AG04450 (cell line): ENCODE measurements at regions of chr2 and their contacts with region 1.

Region 1: GRCh38 chr2:10434886-10435819 is 13.0 kb downstream of the ODC1 start:
- DNase-seq: peak; percentile 34
- H3K4me3 ChIP-seq: no peak overlapping the region
- H3K27ac ChIP-seq: no peak overlapping the region
- H3K27me3 ChIP-seq: no peaks in the 10 kb centered on the region
- CTCF ChIP-seq: peak; percentile 97

Region 2: DNA sequence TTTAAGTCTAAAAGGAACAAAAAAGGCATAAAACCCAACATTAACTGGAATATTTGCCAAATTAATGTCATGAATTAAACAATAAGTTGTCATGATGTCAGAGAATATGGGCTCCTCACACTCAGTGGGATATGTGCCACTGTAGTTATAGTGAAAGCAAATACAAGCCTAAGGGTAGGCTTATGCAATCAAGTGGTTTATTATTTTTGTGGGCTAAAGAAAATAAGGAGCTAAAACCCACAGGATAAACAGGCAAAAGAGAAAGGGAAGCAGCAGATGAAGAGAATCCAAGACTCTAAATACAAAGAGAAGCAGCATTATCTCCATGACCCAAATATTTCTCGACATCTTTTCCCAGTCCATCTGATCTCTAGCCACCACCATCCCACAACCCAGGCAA is 821.9 kb before region 1 on chr2:
- CTCF ChIA-PET with region 1: no interaction called
- POLR2A ChIA-PET with region 1: no interaction called
- DNase-seq: no peak
- H3K4me3 ChIP-seq: no peak overlapping the region
- H3K27ac ChIP-seq: no peak overlapping the region
- H3K27me3 ChIP-seq: no peaks in the 10 kb centered on the region
- CTCF ChIP-seq: no peak

Region 3: DNA sequence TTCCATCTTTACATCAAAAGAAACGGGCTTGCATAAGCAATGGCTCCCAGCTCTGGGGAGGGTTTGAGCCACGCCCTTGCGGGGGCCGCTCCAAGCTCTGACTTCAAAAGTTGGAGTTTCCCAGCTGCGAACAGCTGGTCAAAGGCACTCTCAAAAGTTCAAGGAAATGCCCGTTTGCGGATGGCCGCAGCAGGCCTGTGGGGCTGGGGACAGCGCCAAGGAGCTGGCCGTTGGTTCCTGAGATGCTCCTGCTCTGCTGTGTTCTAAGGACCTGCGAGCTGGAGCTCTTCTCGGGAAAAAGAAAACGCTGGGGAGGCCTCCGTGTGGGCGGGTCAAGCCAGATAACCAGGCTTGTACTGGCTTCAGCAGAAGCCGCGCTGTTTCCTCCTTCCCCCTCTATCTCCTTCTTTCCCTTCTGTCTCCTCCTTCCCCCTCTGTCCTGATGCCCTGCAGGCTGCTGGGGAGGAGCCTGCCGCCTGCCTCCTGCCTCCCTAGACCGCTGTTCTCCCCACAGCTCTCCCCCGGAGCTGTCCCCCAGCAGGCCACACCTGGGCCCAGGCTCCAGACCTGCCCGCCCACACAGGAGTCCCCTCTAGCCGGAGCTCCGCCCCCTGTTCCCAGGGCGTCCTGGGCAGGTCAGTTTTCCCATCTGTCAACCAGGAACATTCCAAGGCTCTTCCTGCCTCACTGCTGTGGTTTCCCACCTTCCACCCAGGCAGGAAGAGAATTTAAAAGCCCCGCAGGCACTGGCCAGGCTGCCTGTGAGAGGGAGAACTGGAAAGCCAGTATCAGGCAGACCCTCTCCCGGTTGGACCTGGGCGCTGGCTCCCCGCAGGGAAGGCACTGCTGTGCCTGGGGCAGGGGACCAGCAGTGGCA is 377.7 kb before region 1 on chr2:
- CTCF ChIA-PET with region 1: interaction called, 10 read pairs
- POLR2A ChIA-PET with region 1: interaction called, 5 read pairs
- DNase-seq: peak; percentile 62
- H3K4me3 ChIP-seq: peak overlapping the region; percentile 39
- H3K27ac ChIP-seq: peak overlapping the region; percentile 94
- H3K27me3 ChIP-seq: peaks cover 9% of the 10 kb centered on the region
- CTCF ChIP-seq: no peak

Region 4: DNA sequence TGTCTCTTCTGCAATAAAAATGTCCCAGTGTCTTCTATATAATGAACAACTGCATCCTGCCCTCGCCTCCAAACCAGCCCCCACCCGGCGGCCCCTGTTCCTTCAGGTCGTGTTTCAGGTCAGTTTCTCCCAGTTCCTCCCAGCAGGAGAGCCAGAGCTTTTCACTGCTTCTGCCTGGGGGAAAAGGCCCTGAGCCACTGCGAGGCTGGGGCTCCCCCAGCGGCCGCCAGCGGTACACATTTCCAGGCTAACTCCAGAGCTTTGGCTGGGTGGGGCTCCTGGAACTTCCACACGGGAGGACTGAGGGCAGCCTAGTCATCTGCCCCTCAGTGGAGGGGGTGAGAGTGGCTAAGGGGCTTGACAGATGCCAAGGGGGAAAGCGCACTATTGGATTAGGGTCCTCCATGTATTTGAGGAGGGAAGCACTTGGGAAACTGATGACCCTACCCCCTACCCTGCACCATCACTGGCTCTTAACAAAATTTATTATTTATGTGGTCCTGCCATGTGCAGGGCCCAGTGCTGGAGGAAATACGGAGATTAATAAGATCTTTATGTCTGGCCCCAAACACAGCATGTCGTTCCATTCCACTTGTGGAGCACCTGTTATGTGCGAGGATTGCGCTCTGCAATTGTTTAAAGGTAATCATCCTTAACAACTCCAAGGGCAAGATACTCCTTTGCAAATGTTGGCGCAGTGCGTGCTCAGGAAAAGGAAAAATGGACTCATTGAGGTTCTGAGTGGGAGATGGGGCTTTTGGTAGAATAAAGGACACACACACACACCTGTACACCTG is 337.6 kb before region 1 on chr2:
- CTCF ChIA-PET with region 1: interaction called, 19 read pairs
- POLR2A ChIA-PET with region 1: no interaction called
- DNase-seq: no peak
- H3K4me3 ChIP-seq: no peak overlapping the region
- H3K27ac ChIP-seq: no peak overlapping the region
- H3K27me3 ChIP-seq: peaks cover 2% of the 10 kb centered on the region
- CTCF ChIP-seq: peak; percentile 95

Region 5: GRCh38 chr2:10269711-10270610 is 165.2 kb before region 1 on chr2:
- CTCF ChIA-PET with region 1: interaction called, 10 read pairs
- POLR2A ChIA-PET with region 1: no interaction called
- DNase-seq: no peak
- H3K4me3 ChIP-seq: no peak overlapping the region
- H3K27ac ChIP-seq: no peak overlapping the region
- H3K27me3 ChIP-seq: peaks cover 2% of the 10 kb centered on the region
- CTCF ChIP-seq: no peak

Region 6: DNA sequence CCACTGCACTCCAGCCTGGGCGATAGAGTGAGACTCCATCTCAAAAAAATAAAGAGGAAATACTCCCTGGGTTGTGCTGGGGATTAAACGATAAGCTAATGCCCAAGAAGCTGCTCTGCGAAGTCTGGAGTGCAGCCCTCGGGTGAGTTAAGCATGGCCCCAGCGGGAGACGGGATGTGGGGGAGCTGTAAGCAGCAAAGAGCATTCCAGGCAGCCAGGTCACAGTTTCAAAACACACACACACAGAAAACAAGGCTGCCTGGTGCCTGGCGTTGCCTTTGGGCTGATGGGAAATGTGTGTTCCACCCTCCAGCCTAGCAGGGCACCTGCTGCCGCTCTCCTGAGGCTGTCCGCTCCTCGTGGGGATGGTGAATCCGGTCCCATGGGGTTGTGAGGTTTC is 11.1 kb before region 1 on chr2:
- CTCF ChIA-PET with region 1: interaction called, 10 read pairs
- POLR2A ChIA-PET with region 1: no interaction called
- DNase-seq: peak; percentile 51
- H3K4me3 ChIP-seq: no peak overlapping the region
- H3K27ac ChIP-seq: peak overlapping the region; percentile 21
- H3K27me3 ChIP-seq: no peaks in the 10 kb centered on the region
- CTCF ChIP-seq: no peak